ENCODE measurements at regions of chr4 and their contacts with region 1.

Region 1: DNA sequence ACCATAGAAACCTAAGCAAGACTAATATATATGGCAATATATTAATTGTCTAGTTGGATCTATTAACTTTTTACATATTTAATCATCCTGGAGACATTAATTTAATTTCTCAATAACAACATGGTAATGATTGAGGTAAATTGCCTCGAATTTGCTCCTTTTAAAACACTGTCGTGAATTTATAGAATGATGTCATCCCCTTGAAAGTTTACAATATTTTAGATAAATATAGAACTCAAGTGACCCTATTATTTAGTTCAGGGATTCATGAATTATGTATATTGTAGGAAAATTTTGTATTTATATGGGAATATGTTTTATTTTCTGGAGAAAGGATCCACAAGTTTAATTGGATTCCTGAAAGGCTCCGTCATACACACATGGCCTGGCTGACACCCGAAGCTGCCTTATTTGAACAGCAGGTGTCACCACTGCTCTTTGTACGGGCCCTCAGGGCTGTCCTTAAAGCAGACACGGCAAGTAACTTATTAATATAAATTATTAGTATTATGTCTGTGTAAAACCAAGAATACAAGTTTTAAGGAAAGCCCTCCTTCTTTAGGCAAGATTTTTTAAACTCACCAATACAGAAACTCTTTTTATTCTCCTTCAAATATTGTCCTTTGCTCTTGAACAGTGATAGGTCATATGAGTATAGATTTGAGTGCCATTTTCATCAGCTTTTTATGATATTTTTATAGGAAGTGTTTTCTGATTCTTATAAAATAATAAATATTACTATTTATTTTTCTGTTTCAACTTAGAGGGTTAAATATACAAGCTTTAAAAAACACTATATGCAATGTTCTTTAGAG is 1.9 kb upstream of the PLRG1 start:
- DNase-seq: peak; percentile 74
- H3K4me3 ChIP-seq: no peak overlapping the region
- H3K27ac ChIP-seq: no peak overlapping the region
- H3K4me1 ChIP-seq: peaks cover 19% of the 10 kb centered on the region
- CTCF ChIP-seq: peak; percentile 95

Region 2: GRCh38 chr4:154526151-154526550 is 25.9 kb before region 1 on chr4:
- CTCF ChIA-PET with region 1: interaction called, 3 read pairs
- POLR2A ChIA-PET with region 1: interaction called, 76 read pairs
- intact Hi-C with region 1: no loop called
- DNase-seq: peak; percentile 61
- H3K4me3 ChIP-seq: peak overlapping the region; percentile 23
- H3K27ac ChIP-seq: peak overlapping the region; percentile 56
- H3K4me1 ChIP-seq: peaks cover 32% of the 10 kb centered on the region
- CTCF ChIP-seq: no peak

Region 3: GRCh38 chr4:154618708-154619315 is 66.7 kb after region 1 on chr4:
- CTCF ChIA-PET with region 1: interaction called, 3 read pairs
- POLR2A ChIA-PET with region 1: interaction called, 5 read pairs
- intact Hi-C with region 1: loop called (anchors 1 kb)
- DNase-seq: peak; percentile 73
- H3K4me3 ChIP-seq: no peak overlapping the region
- H3K27ac ChIP-seq: no peak overlapping the region
- H3K4me1 ChIP-seq: peaks cover 9% of the 10 kb centered on the region
- CTCF ChIP-seq: peak; percentile 88

Region 4: DNA sequence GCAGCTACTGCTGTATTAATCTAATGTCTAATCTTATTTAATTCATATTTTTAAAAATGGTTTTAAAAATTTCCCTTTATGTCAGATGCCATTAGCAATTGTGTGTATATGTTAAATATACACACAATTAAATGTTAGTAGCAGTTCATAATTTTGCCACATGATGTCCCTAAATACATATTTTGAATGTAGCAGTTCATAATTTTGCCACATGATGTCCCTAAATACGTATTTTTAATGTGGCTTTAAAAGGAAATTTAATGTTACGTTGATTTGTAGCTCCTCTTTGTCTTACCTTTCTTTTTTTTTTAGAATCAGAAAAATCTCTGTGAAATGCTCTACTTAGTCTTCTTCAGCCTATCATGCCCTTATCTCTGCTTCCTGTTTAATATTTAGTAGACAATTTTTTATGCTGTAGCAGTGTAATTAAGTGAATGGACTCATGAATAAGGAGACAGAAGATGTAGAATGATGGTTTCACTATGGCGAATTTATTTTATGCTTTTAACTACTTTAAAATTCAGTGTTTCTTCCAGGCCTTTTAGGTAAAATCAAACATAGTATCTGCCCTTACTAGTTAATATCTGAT is 255.1 kb after region 1 on chr4:
- CTCF ChIA-PET with region 1: no interaction called
- POLR2A ChIA-PET with region 1: no interaction called
- intact Hi-C with region 1: loop called (anchors 10 kb)
- DNase-seq: peak; percentile 49
- H3K4me3 ChIP-seq: no peak overlapping the region
- H3K27ac ChIP-seq: no peak overlapping the region
- H3K4me1 ChIP-seq: no peaks in the 10 kb centered on the region
- CTCF ChIP-seq: peak; percentile 95

Region 5: DNA sequence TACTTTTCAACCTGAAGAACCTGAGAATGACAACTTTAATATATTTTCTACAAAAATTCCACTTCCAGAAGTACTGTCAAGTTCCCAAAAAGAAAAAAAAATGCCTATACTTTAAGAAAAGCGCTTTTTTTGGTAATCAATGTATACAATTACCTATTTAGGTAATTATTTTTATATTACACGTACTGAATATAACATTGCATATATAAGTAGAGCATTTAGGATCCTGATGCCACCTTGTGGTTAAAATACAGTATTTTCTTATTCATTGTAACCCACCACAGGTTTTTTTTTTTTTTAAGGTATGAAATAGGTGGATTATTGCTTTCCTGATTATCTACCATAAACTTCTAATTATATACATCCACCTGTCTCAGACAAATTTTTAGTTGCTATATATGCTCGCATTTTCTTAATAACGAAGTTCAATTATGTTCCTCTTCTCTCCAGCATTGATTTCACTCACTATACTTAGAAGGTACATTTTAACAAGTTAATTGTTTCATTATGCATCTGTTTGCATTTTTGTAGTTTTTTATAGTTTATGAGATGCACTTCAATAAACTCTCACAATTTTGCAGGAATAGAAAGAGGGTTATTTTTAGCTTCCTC is 819.5 kb after region 1 on chr4:
- CTCF ChIA-PET with region 1: no interaction called
- POLR2A ChIA-PET with region 1: no interaction called
- intact Hi-C with region 1: loop called (anchors 5 kb)
- DNase-seq: peak; percentile 54
- H3K4me3 ChIP-seq: no peak overlapping the region
- H3K27ac ChIP-seq: no peak overlapping the region
- H3K4me1 ChIP-seq: peaks cover 11% of the 10 kb centered on the region
- CTCF ChIP-seq: peak; percentile 87